ENCODE measurements at regions of chr19 and their contacts with region 1.

Region 1: GRCh38 chr19:35775298-35776110 is at the start of gene ARHGAP33:
- DNase-seq: peak; percentile 96 to 100 (median 98)
- ATAC-seq: peak; percentile 98
- H3K4me3 ChIP-seq: peak within 1 kb of the TSS; percentile 69
- H3K4me3 Mint-ChIP-seq: peak within 1 kb of the TSS; percentile 90
- H3K27ac ChIP-seq: no peak within 1 kb of the TSS
- H3K27ac Mint-ChIP-seq: no peak within 1 kb of the TSS
- H3K4me1 ChIP-seq: peaks cover 21% of the 10 kb centered on the region
- H3K4me1 Mint-ChIP-seq: peaks cover 24% of the 10 kb centered on the region
- H3K27me3 ChIP-seq: no peaks in the 10 kb centered on the region
- H3K27me3 Mint-ChIP-seq: no peaks in the 10 kb centered on the region
- CTCF ChIP-seq: no peak
- total RNA-seq, gene ARHGAP33: 16.4 to 19.5 TPM

Region 2: GRCh38 chr19:35757749-35758608 is 17.5 kb before region 1 on chr19 and contains the start of gene PROSER3:
- CTCF ChIA-PET with region 1: no interaction called
- POLR2A ChIA-PET with region 1: interaction called, 3 read pairs
- intact Hi-C with region 1: loop called (anchors 2 kb)
- DNase-seq: peak; percentile 95 to 100 (median 98)
- ATAC-seq: peak; percentile 96
- H3K4me3 ChIP-seq: peak within 1 kb of the TSS; percentile 81
- H3K4me3 Mint-ChIP-seq: peak within 1 kb of the TSS; percentile 99
- H3K27ac ChIP-seq: peak within 1 kb of the TSS; percentile 61 to 97
- H3K27ac Mint-ChIP-seq: peak within 1 kb of the TSS; percentile 88
- H3K4me1 ChIP-seq: peaks cover 43% of the 10 kb centered on the region
- H3K4me1 Mint-ChIP-seq: peaks cover 41% of the 10 kb centered on the region
- H3K27me3 ChIP-seq: peaks cover 0 to 2% of the 10 kb centered on the region in 2 experiments
- H3K27me3 Mint-ChIP-seq: peaks cover 15% of the 10 kb centered on the region
- CTCF ChIP-seq: no peak
- total RNA-seq, gene PROSER3: 19.4 to 22.6 TPM